H1 (cell line): ENCODE measurements at regions of chr6 and their contacts with region 1.

Region 1: DNA sequence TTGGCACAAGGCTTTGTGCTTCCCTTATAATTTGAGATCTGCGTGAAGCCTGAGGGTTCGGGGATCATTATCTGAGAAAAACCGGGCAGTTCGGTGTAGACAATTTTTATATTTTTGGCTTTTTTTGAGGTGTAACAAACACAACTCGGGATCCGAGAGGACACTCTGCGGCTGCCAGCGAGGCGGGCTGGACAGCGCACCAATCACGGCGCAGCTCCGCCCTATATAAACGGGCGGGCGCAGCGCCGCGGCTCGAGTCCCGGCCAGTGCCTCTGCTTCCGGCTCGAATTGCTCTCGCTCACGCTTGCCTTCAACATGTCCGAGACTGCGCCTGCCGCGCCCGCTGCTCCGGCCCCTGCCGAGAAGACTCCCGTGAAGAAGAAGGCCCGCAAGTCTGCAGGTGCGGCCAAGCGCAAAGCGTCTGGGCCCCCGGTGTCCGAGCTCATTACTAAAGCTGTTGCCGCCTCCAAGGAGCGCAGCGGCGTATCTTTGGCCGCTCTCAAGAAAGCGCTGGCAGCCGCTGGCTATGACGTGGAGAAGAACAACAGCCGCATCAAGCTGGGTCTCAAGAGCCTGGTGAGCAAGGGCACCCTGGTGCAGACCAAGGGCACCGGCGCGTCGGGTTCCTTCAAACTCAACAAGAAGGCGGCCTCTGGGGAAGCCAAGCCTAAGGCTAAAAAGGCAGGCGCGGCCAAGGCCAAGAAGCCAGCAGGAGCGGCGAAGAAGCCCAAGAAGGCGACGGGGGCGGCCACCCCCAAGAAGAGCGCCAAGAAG is 69.0 kb downstream of the HFE start:
- DNase-seq: peak; percentile 67 to 95
- H3K4me3 ChIP-seq: peak overlapping the region; percentile 90 to 100 (median 92)
- H3K27ac ChIP-seq: peak overlapping the region; percentile 97
- H3K4me1 ChIP-seq: peaks cover 0 to 3% (median 3%) of the 10 kb centered on the region in 4 experiments; a peak in 5 of 7 replicates
- H3K27me3 ChIP-seq: no peaks in the 10 kb centered on the region
- CTCF ChIP-seq: no peak
- EP300 ChIP-seq: no peak
- POLR2A ChIP-seq: peak; percentile 87 to 97
- RAD21 ChIP-seq: 0 out of 4 replicates have a peak, but pooled peaks have one; percentile 2 to 9

Region 2: GRCh38 chr6:26103770-26104456 is 52.4 kb before region 1 on chr6:
- CTCF ChIA-PET with region 1: no interaction called
- POLR2A ChIA-PET with region 1: interaction called, 202 read pairs
- DNase-seq: peak; percentile 80 to 83
- H3K4me3 ChIP-seq: peak overlapping the region; percentile 41 to 63 (median 52)
- H3K27ac ChIP-seq: peak overlapping the region; percentile 92
- H3K4me1 ChIP-seq: peaks cover 0 to 3% (median 0%) of the 10 kb centered on the region in 4 experiments; a peak in 2 of 7 replicates
- H3K27me3 ChIP-seq: no peaks in the 10 kb centered on the region
- CTCF ChIP-seq: peak in 2 of 3 experiments; percentile 26 to 37; a peak in 3 of 4 replicates
- EP300 ChIP-seq: peak in 1 of 2 experiments; percentile 96; a peak in 1 of 3 replicates
- POLR2A ChIP-seq: peak; percentile 98 to 99
- RAD21 ChIP-seq: no peak; a peak in 1 of 4 replicates

Region 3: GRCh38 chr6:26204332-26205165 is 48.3 kb after region 1 on chr6:
- CTCF ChIA-PET with region 1: no interaction called
- POLR2A ChIA-PET with region 1: interaction called, 2,060 read pairs
- DNase-seq: peak; percentile 88 to 97
- H3K4me3 ChIP-seq: peak overlapping the region; percentile 64 to 94 (median 82)
- H3K27ac ChIP-seq: peak overlapping the region; percentile 98
- H3K4me1 ChIP-seq: peaks cover 0 to 15% (median 5%) of the 10 kb centered on the region in 4 experiments; a peak in 6 of 7 replicates
- H3K27me3 ChIP-seq: no peaks in the 10 kb centered on the region
- CTCF ChIP-seq: peak in 1 of 3 experiments; percentile 18; a peak in 1 of 4 replicates
- EP300 ChIP-seq: peak; percentile 13 to 95; a peak in 2 of 3 replicates
- POLR2A ChIP-seq: peak; percentile 99 to 100
- RAD21 ChIP-seq: 0 out of 4 replicates have a peak, but pooled peaks of 1 of the 2 experiments have one; percentile 14

Region 4: GRCh38 chr6:26258200-26258977 is 102.1 kb after region 1 on chr6:
- CTCF ChIA-PET with region 1: no interaction called
- POLR2A ChIA-PET with region 1: interaction called, 21 read pairs
- DNase-seq: no peak
- H3K4me3 ChIP-seq: no peak overlapping the region
- H3K27ac ChIP-seq: no peak overlapping the region
- H3K4me1 ChIP-seq: peaks cover 0 to 4% (median 0%) of the 10 kb centered on the region in 4 experiments; a peak in 1 of 7 replicates
- H3K27me3 ChIP-seq: no peaks in the 10 kb centered on the region
- CTCF ChIP-seq: peak in 2 of 3 experiments; percentile 9 to 36; a peak in 2 of 4 replicates
- EP300 ChIP-seq: no peak
- POLR2A ChIP-seq: no peak
- RAD21 ChIP-seq: peak in 1 of 2 experiments; percentile 31; a peak in 1 of 4 replicates

Region 5: GRCh38 chr6:27146706-27147505 is 990.6 kb after region 1 on chr6:
- CTCF ChIA-PET with region 1: no interaction called
- POLR2A ChIA-PET with region 1: interaction called, 52 read pairs
- DNase-seq: peak; percentile 89 to 93
- H3K4me3 ChIP-seq: peak overlapping the region; percentile 60 to 86 (median 76)
- H3K27ac ChIP-seq: peak overlapping the region; percentile 98
- H3K4me1 ChIP-seq: peaks cover 0 to 11% (median 1%) of the 10 kb centered on the region in 4 experiments; a peak in 4 of 7 replicates
- H3K27me3 ChIP-seq: no peaks in the 10 kb centered on the region
- CTCF ChIP-seq: no peak
- EP300 ChIP-seq: 0 out of 3 replicates have a peak, but pooled peaks of 1 of the 2 experiments have one; percentile 16
- POLR2A ChIP-seq: peak; percentile 98 to 99
- RAD21 ChIP-seq: no peak

Region 6: DNA sequence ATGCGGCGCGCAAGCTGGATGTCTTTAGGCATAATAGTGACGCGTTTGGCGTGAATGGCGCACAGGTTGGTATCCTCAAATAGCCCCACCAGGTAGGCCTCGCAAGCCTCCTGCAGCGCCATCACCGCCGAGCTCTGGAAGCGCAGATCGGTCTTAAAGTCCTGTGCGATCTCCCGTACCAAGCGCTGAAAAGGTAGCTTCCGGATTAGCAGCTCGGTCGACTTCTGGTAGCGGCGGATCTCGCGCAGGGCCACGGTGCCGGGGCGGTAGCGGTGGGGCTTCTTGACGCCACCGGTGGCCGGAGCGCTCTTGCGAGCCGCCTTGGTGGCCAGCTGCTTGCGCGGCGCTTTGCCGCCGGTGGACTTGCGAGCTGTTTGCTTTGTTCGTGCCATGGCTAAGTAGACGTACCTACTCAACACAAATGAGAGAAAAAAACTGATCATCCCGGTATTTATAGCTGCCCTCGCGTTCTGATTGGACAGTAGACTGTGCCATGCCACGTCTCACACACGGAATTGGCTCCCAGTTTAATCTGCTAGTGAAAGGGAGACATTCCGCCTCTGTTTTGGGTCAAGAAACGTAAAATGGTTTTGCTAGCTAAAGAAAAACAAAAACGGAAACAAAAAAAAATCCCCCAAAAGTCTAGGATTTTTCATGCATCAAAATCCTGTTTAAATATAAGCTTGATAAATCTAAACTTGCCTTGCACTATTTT is 1715.8 kb after region 1 on chr6:
- CTCF ChIA-PET with region 1: no interaction called
- POLR2A ChIA-PET with region 1: interaction called, 76 read pairs
- DNase-seq: peak in 1 of 2 experiments; percentile 89
- H3K4me3 ChIP-seq: peak overlapping the region; percentile 61 to 73 (median 67)
- H3K27ac ChIP-seq: peak overlapping the region; percentile 96
- H3K4me1 ChIP-seq: peaks cover 0 to 16% (median 9%) of the 10 kb centered on the region in 4 experiments; a peak in 5 of 7 replicates
- H3K27me3 ChIP-seq: no peaks in the 10 kb centered on the region
- CTCF ChIP-seq: peak in 2 of 3 experiments; percentile 22 to 26; a peak in 3 of 4 replicates
- EP300 ChIP-seq: no peak; a peak in 1 of 3 replicates
- POLR2A ChIP-seq: peak; percentile 97 to 98
- RAD21 ChIP-seq: no peak